ENCODE measurements at regions of chr9 and their contacts with region 1.

Region 1: GRCh38 chr9:98202252-98202651 is 9.8 kb upstream of the CORO2A start:
- DNase-seq: no peak
- ATAC-seq: no peak
- H3K4me3 ChIP-seq: no peak overlapping the region
- H3K4me3 Mint-ChIP-seq: no peak overlapping the region
- H3K27ac ChIP-seq: no peak overlapping the region
- H3K27ac Mint-ChIP-seq: no peak overlapping the region
- H3K4me1 ChIP-seq: no peaks in the 10 kb centered on the region
- H3K4me1 Mint-ChIP-seq: peaks cover 5% of the 10 kb centered on the region
- H3K27me3 ChIP-seq: no peaks in the 10 kb centered on the region
- H3K27me3 Mint-ChIP-seq: no peaks in the 10 kb centered on the region
- CTCF ChIP-seq: no peak

Region 2: DNA sequence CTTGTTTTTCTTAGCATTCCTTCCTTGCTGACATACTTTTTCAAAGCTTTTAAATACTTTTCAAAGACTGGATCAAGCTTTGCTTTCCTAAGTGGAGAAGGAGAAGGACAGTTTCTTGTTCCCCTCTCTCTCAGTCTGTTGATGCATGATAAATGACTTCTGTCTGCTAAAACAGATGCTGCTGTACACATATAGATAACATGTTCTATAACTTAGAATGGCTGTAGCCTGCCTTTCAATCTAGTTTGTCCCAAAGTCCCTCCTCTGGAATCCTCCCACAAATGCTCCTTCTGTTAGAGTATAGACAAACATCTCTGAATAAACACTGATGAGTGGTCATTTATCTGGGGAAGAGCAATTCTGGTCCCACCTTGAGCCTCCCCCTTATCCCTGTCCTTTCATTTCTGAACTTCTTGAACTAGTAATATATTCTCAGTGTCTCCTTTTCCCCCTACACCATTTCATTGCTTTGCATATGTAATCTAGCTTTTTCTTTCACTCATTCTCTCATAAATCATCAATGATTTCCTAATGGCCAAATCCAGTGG is 258.9 kb before region 1 on chr9:
- CTCF ChIA-PET with region 1: no interaction called
- POLR2A ChIA-PET with region 1: no interaction called
- intact Hi-C with region 1: no loop called
- DNase-seq: no peak
- ATAC-seq: no peak
- H3K4me3 ChIP-seq: no peak overlapping the region
- H3K4me3 Mint-ChIP-seq: no peak overlapping the region
- H3K27ac ChIP-seq: no peak overlapping the region
- H3K27ac Mint-ChIP-seq: no peak overlapping the region
- H3K4me1 ChIP-seq: peaks cover 7% of the 10 kb centered on the region
- H3K4me1 Mint-ChIP-seq: peaks cover 8% of the 10 kb centered on the region
- H3K27me3 ChIP-seq: no peaks in the 10 kb centered on the region
- H3K27me3 Mint-ChIP-seq: no peaks in the 10 kb centered on the region
- CTCF ChIP-seq: no peak

Region 3: DNA sequence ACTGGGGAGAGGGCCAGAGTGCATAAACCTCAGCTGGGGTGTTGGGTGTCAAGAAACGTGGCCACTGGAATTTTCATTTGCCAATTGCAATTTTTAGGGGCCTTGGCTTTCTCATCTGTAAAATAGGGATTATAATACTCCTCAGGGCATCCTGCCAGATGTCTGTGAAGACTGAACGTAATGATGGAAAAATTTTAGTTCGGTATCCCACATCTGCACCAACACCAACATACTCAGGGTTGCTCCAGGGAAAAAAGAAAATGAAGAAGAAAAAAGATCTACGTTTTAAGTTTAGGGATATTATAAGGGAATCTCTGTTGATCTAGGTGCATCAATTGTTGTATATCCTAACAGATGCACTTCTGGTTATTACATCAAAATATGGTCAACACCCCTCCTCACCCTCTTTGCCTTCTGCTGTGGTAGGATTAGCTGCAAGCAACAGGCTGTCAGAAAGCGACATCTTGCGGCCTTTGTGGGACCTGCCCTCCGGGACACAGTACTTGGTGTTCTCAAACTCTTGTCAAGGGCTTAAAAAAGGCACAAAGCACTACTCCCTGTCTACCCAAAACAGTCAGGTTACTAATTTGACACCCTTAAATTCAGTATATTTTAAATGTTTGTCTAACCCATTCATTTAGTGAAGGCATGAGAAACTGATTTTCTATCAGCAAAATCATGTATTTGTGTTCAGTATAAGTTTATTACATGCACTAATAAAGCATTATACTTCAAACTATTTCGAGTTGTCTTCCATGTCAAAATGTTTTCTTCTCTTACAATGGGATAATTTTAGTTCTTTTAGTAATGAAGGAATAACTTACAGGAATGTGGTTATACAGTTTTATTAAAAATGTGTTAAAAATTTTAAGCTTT is 61.5 kb after region 1 on chr9:
- CTCF ChIA-PET with region 1: interaction called, 22 read pairs
- POLR2A ChIA-PET with region 1: interaction called, 3 read pairs
- intact Hi-C with region 1: loop called (anchors 1 kb)
- DNase-seq: peak; percentile 70 to 87 (median 84)
- ATAC-seq: peak; percentile 100
- H3K4me3 ChIP-seq: no peak overlapping the region
- H3K4me3 Mint-ChIP-seq: no peak overlapping the region
- H3K27ac ChIP-seq: no peak overlapping the region
- H3K27ac Mint-ChIP-seq: no peak overlapping the region
- H3K4me1 ChIP-seq: no peaks in the 10 kb centered on the region
- H3K4me1 Mint-ChIP-seq: peaks cover 2% of the 10 kb centered on the region
- H3K27me3 ChIP-seq: no peaks in the 10 kb centered on the region
- H3K27me3 Mint-ChIP-seq: no peaks in the 10 kb centered on the region
- CTCF ChIP-seq: peak; percentile 92